ENCODE measurements at regions of chr11 and their contacts with region 1.

Region 1: DNA sequence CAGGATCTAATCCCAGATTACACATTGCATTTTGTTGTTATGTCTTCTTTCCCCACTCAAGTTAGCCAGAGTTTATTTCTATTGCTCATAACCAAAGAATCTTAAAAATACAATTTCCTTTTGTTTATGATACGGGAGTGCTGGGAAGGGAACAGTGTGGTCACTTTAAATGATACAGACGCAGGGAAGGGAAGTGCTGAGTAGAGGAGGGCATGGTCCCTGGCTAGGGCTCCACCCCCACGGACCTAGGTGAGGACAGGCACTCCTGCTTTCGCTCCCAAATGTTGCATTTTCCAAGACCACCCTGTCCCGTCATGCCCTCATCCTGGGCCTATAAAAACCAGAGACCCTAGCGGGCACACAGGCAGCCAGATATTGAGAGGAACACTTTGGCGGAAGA is 30.6 kb upstream of the NARS2 start:
- DNase-seq: no peak
- ATAC-seq: no peak
- H3K4me3 ChIP-seq: no peak overlapping the region
- H3K27ac ChIP-seq: no peak overlapping the region
- H3K4me1 ChIP-seq: peaks cover 28% of the 10 kb centered on the region
- H3K27me3 ChIP-seq: no peaks in the 10 kb centered on the region
- CTCF ChIP-seq: no peak
- EP300 ChIP-seq: no peak
- POLR2A ChIP-seq: no peak
- RAD21 ChIP-seq: no peak

Region 2: GRCh38 chr11:76872959-76873827 is 1732.1 kb before region 1 on chr11:
- CTCF ChIA-PET with region 1: no interaction called
- POLR2A ChIA-PET with region 1: no interaction called
- in situ Hi-C with region 1: no loop called
- intact Hi-C with region 1: loop called (anchors 10 kb)
- DNase-seq: no peak
- ATAC-seq: no peak
- H3K4me3 ChIP-seq: no peak overlapping the region
- H3K27ac ChIP-seq: no peak overlapping the region
- H3K4me1 ChIP-seq: no peaks in the 10 kb centered on the region
- H3K27me3 ChIP-seq: no peaks in the 10 kb centered on the region
- CTCF ChIP-seq: no peak
- EP300 ChIP-seq: no peak
- POLR2A ChIP-seq: no peak
- RAD21 ChIP-seq: no peak

Region 3: GRCh38 chr11:79055856-79056642 is 450.8 kb after region 1 on chr11:
- CTCF ChIA-PET with region 1: no interaction called
- POLR2A ChIA-PET with region 1: no interaction called
- in situ Hi-C with region 1: no loop called
- intact Hi-C with region 1: no loop called
- DNase-seq: no peak
- ATAC-seq: no peak
- H3K4me3 ChIP-seq: no peak overlapping the region
- H3K27ac ChIP-seq: no peak overlapping the region
- H3K4me1 ChIP-seq: no peaks in the 10 kb centered on the region
- H3K27me3 ChIP-seq: no peaks in the 10 kb centered on the region
- CTCF ChIP-seq: no peak
- EP300 ChIP-seq: no peak
- POLR2A ChIP-seq: no peak
- RAD21 ChIP-seq: no peak